ENCODE measurements at regions of chr4 and their contacts with region 1.

Region 1: GRCh38 chr4:160129416-160129815 is 1026.5 kb downstream of the RAPGEF2 start:
- DNase-seq: no peak
- H3K4me3 ChIP-seq: no peak overlapping the region
- H3K4me3 Mint-ChIP-seq: no peak overlapping the region
- H3K27ac Mint-ChIP-seq: no peak overlapping the region
- H3K4me1 ChIP-seq: peaks cover 37% of the 10 kb centered on the region
- H3K4me1 Mint-ChIP-seq: peaks cover 7% of the 10 kb centered on the region
- H3K27me3 ChIP-seq: no peaks in the 10 kb centered on the region
- H3K27me3 Mint-ChIP-seq: no peaks in the 10 kb centered on the region
- CTCF ChIP-seq: no peak

Region 2: GRCh38 chr4:159977907-159978617 is 151.4 kb before region 1 on chr4:
- CTCF ChIA-PET with region 1: no interaction called
- POLR2A ChIA-PET with region 1: no interaction called
- intact Hi-C with region 1: loop called (anchors 5 kb)
- DNase-seq: no peak
- H3K4me3 ChIP-seq: no peak overlapping the region
- H3K4me3 Mint-ChIP-seq: no peak overlapping the region
- H3K27ac Mint-ChIP-seq: peak overlapping the region; percentile 92
- H3K4me1 ChIP-seq: peaks cover 19% of the 10 kb centered on the region
- H3K4me1 Mint-ChIP-seq: peaks cover 23% of the 10 kb centered on the region
- H3K27me3 ChIP-seq: no peaks in the 10 kb centered on the region
- H3K27me3 Mint-ChIP-seq: no peaks in the 10 kb centered on the region
- CTCF ChIP-seq: no peak

Region 3: GRCh38 chr4:160082432-160083207 is 46.8 kb before region 1 on chr4:
- CTCF ChIA-PET with region 1: no interaction called
- POLR2A ChIA-PET with region 1: no interaction called
- intact Hi-C with region 1: loop called (anchors 2 kb)
- DNase-seq: no peak
- H3K4me3 ChIP-seq: no peak overlapping the region
- H3K4me3 Mint-ChIP-seq: no peak overlapping the region
- H3K27ac Mint-ChIP-seq: no peak overlapping the region
- H3K4me1 ChIP-seq: no peaks in the 10 kb centered on the region
- H3K4me1 Mint-ChIP-seq: no peaks in the 10 kb centered on the region
- H3K27me3 ChIP-seq: no peaks in the 10 kb centered on the region
- H3K27me3 Mint-ChIP-seq: no peaks in the 10 kb centered on the region
- CTCF ChIP-seq: no peak

Region 4: DNA sequence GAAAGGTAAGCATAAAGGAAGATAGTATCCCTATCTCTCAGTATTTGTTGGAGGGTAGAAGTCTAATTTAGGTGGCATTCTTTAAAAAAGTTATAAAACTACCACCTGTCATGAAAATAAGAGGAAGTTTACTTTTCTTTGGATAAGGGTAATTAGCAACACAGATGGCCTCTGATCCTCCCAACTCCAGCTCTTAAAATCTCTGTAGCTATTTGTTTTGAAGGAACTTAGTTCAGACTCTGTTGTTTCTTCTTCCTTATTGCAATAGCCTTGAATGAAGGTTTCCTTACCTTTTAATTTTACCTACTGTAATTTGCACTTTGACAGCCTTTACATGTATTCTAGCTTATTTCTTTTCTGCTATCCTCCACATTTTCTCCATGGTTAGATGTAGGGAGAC is 234.8 kb after region 1 on chr4:
- CTCF ChIA-PET with region 1: no interaction called
- POLR2A ChIA-PET with region 1: no interaction called
- intact Hi-C with region 1: no loop called
- DNase-seq: no peak
- H3K4me3 ChIP-seq: no peak overlapping the region
- H3K4me3 Mint-ChIP-seq: no peak overlapping the region
- H3K27ac Mint-ChIP-seq: no peak overlapping the region
- H3K4me1 ChIP-seq: no peaks in the 10 kb centered on the region
- H3K4me1 Mint-ChIP-seq: no peaks in the 10 kb centered on the region
- H3K27me3 ChIP-seq: no peaks in the 10 kb centered on the region
- H3K27me3 Mint-ChIP-seq: no peaks in the 10 kb centered on the region
- CTCF ChIP-seq: no peak

Measured in Caco-2 (cell line).